Vagina (tissue), 2 donors: ENCODE measurements at regions of chr1 and their contacts with region 1.

Region 1: GRCh38 chr1:36420836-36421664 is 23.3 kb upstream of the LSM10 start:
- DNase-seq: no peak
- H3K4me3 ChIP-seq: no peak overlapping the region
- H3K27ac ChIP-seq: peak overlapping the region; percentile 69
- H3K4me1 ChIP-seq: peaks cover 6% of the 10 kb centered on the region
- H3K27me3 ChIP-seq: no peaks in the 10 kb centered on the region
- CTCF ChIP-seq: peak; percentile 83 to 94 (median 88)
- POLR2A ChIP-seq: no peak

Region 2: DNA sequence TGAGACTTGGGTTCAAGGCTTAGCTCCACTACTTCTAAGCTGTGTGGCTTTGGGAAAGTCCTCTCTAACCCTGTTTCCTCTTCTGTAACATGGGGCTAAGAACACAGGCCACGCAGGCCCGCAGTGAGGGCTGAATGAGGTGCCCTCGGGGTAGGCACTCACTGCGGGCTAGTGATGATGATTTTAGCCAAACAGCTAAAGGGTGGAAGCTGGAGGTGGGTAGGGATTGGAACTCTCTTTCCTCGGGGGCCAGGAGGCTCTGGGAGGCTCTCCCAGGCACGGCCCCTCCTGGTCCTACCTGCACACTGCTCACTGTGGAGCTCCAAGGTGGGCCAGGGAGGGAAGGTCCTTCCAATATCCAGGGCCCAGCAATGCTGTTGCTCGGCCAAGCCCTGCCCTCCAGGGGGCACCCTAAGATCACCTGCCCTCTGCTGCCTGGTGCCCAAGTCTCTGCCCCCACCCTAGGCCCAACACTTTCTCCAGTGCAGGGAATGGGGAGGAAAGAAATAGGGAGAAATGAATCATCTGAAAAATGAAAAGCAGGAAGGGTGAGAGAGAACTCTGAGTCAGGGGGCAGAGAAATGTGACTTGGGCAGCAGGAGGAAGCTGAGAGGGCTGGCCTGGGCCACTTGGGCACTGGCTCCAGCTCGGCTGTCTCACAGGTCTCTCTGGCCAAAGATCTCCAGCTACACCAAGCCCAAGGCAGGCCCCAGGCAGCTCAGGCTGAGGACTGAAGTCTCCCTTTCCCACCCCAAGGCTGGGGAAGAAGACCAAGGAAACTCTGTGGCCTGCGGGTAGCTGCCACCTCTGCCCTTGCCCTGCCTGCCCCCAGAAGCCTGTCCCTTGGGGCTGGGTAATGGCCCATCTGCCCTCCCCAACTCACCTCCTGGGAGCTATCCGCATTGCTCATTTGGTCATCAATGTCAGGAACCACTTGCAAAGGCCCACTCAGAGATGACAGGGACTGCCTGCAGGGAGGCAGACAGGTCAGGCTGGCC is 78.3 kb before region 1 on chr1:
- intact Hi-C with region 1: loop called (anchors 5 kb)
- DNase-seq: no peak
- H3K4me3 ChIP-seq: no peak overlapping the region
- H3K27ac ChIP-seq: peak overlapping the region; percentile 30
- H3K4me1 ChIP-seq: peaks cover 7% of the 10 kb centered on the region
- H3K27me3 ChIP-seq: no peaks in the 10 kb centered on the region
- CTCF ChIP-seq: peak; percentile 39 to 75 (median 42)
- POLR2A ChIP-seq: no peak

Region 3: DNA sequence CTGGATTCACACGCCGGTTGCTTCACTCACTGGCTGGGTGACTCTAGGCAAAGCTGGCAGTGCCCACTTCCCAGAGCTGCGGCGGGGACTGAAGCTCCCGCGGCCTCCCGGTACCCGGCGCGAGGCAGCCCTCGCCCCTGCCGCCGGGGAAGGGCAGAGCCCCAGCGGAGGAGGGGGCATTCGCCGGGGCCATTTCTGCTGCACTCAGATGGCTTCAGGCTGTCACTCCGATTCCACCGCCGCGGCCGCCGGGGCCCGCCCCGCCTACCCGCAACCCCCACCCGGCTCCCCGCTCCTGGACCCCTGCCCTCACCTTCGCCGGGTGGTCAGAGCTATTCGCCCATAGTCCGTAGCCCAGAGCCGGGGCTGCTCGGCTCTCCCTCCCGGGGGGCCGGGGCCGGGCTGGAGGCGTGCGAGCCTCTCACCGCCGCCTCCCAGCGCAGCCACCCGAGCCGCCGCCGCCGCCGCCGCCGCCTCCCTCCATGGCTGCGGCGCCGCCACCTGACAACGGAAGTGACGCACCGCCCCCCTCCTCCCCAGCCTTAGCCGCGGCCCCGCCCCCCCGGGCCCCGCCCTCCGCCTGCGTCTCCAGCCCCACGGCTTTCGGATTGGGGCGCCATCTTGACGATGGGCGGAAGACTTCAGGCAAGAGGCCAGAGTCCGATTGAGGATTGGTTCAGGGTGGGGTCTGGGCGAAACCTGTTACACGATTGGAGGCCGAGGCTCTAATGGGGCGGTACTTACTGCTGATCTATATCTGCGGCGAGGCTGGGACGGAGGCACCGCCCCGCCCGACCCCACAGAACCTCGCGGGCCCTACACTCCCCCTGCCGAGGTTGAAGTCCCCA is 35.4 kb before region 1 on chr1 and contains the start of gene STK40:
- intact Hi-C with region 1: no loop called
- DNase-seq: peak in 1 of 2 donors; percentile 100
- H3K4me3 ChIP-seq: peak within 1 kb of the TSS; percentile 67 to 95
- H3K27ac ChIP-seq: peak within 1 kb of the TSS; percentile 99
- H3K4me1 ChIP-seq: peaks cover 47% of the 10 kb centered on the region
- H3K27me3 ChIP-seq: no peaks in the 10 kb centered on the region
- CTCF ChIP-seq: no peak
- POLR2A ChIP-seq: peak in 1 of 2 donors; percentile 96
- total RNA-seq, gene STK40: 35.4 TPM